ENCODE measurements at regions of chr6 and their contacts with region 1.

Region 1: GRCh38 chr6:112879920-112880413 is 532.8 kb downstream of the RFPL4B start:
- DNase-seq: no peak
- ATAC-seq: no peak
- H3K4me3 ChIP-seq: no peak overlapping the region
- H3K27ac ChIP-seq: no peak overlapping the region
- H3K4me1 ChIP-seq: peaks cover 13% of the 10 kb centered on the region
- H3K27me3 ChIP-seq: no peaks in the 10 kb centered on the region
- CTCF ChIP-seq: no peak

Region 2: GRCh38 chr6:111147440-111147839 is 1732.5 kb before region 1 on chr6:
- CTCF ChIA-PET with region 1: no interaction called
- POLR2A ChIA-PET with region 1: no interaction called
- intact Hi-C with region 1: no loop called
- DNase-seq: no peak
- ATAC-seq: no peak
- H3K4me3 ChIP-seq: no peak overlapping the region
- H3K27ac ChIP-seq: no peak overlapping the region
- H3K4me1 ChIP-seq: no peaks in the 10 kb centered on the region
- H3K27me3 ChIP-seq: no peaks in the 10 kb centered on the region
- CTCF ChIP-seq: no peak

Region 3: DNA sequence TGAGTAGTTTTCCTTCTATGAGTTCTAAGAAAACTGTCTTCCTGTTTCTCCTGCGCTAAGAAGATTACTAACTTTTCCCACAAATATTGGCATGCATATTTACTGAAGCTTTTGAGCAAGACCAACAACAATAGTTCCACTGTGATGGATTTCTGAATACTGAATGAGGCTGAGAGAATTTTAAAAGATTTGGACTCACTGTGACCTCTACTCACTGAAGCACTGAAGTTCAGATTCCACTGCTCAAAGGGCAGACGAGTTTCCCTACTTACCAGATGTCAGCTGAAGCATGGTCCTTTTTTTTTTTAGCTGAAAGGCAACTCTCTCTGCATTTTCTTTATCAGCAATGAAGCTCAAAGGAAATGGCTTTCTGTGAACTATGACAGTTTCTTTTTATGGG is 185.6 kb after region 1 on chr6:
- CTCF ChIA-PET with region 1: no interaction called
- POLR2A ChIA-PET with region 1: no interaction called
- intact Hi-C with region 1: loop called (anchors 10 kb)
- DNase-seq: no peak
- ATAC-seq: no peak; the same call in 1 of the 2 replicates
- H3K4me3 ChIP-seq: no peak overlapping the region
- H3K27ac ChIP-seq: no peak overlapping the region
- H3K4me1 ChIP-seq: peaks cover 25% of the 10 kb centered on the region
- H3K27me3 ChIP-seq: no peaks in the 10 kb centered on the region
- CTCF ChIP-seq: no peak

Region 4: GRCh38 chr6:113292646-113293422 is 412.9 kb after region 1 on chr6:
- CTCF ChIA-PET with region 1: no interaction called
- POLR2A ChIA-PET with region 1: no interaction called
- intact Hi-C with region 1: loop called (anchors 5 kb)
- DNase-seq: no peak
- ATAC-seq: no peak
- H3K4me3 ChIP-seq: no peak overlapping the region
- H3K27ac ChIP-seq: no peak overlapping the region
- H3K4me1 ChIP-seq: peaks cover 15% of the 10 kb centered on the region
- H3K27me3 ChIP-seq: no peaks in the 10 kb centered on the region
- CTCF ChIP-seq: no peak